Dorsolateral prefrontal cortex (tissue), 120 donors: ENCODE measurements at regions of chr18 and their contacts with region 1.

Region 1: DNA sequence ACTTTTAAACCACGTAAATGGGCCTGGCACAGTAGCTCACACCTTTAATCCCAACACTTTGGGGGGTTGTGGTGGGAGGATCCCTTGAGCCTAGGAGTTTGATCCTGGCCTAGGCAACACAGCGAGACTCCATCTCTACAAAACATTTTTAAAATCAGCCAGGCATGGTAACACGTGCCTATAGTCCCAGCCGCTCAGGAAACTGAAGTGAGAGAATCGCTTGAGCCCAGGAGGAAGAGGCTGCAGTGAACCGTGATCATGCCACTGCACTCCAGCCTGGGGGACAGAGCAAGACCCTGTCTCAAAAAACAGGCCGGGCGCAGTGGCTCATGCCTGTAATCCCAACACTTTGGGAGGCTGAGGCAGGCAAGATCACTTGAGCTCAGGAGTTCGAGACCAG is 12.2 kb downstream of the ROCK1 start:
- DNase-seq: no peak
- H3K4me3 ChIP-seq: no peak overlapping the region
- H3K27ac ChIP-seq: no peak overlapping the region
- H3K27me3 ChIP-seq: no peaks in the 10 kb centered on the region
- CTCF ChIP-seq: no peak

Region 2: GRCh38 chr18:20971886-20972267 is 127.6 kb before region 1 on chr18:
- intact Hi-C with region 1: no loop called
- DNase-seq: no peak
- H3K4me3 ChIP-seq: no peak overlapping the region
- H3K27ac ChIP-seq: no peak overlapping the region
- H3K27me3 ChIP-seq: no peaks in the 10 kb centered on the region
- CTCF ChIP-seq: peak in 22 of 56 donors; percentile 6 to 37 (median 17)

Region 3: DNA sequence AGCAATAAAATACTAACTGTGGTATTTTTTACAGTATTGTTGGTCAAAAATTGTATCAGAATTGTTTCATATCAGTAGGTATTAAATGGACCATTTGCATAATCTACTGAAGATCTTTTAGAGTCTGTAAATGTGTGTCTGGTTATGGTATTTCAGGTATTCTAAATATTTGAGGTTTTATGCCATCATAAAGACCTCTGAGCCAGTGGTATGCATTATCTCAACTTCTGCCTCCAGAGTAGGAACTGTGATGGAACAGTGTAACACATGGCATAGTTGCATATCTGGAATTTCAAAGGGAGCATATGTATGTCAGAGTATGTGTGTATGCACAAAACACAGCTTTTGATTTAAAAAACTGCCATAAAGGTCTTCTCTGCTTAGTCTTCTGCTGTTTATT is 157.9 kb after region 1 on chr18:
- intact Hi-C with region 1: loop called in 1 of 2 experiments (anchors 10 kb)
- DNase-seq: no peak
- H3K4me3 ChIP-seq: no peak overlapping the region
- H3K27ac ChIP-seq: peak overlapping the region in 32 of 59 donors; percentile 7 to 83 (median 60)
- H3K27me3 ChIP-seq: no peaks in the 10 kb centered on the region
- CTCF ChIP-seq: no peak

Region 4: DNA sequence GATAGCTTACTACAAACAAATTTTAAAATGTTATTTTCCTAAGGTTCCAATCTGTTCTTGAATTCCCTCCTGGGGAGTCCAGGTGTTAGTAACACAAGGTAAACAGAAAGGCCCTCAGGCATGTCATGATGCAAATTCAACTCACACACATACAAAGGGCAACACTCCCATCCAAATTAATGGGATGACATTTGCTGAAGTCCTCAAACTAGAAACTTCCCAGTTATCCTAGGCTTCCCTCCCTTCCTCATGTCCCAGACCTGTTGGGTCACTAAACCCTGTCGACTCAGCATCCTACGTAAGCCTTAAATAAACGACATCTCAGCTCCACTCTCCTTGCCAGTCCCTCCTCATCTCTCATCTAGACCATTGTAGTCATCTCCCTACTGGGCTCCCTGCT is 227.7 kb after region 1 on chr18:
- intact Hi-C with region 1: no loop called
- DNase-seq: no peak
- H3K4me3 ChIP-seq: no peak overlapping the region
- H3K27ac ChIP-seq: no peak overlapping the region
- H3K27me3 ChIP-seq: peaks cover 0 to 2% (median 0%) of the 10 kb centered on the region in 45 donors
- CTCF ChIP-seq: no peak